ENCODE measurements at regions of chr3 and their contacts with region 1.

Region 1: GRCh38 chr3:63993653-63994079 is 29.6 kb downstream of the PSMD6 start:
- DNase-seq: peak; percentile 71
- H3K4me3 ChIP-seq: no peak overlapping the region
- H3K27ac ChIP-seq: no peak overlapping the region
- H3K4me1 ChIP-seq: peaks cover 5% of the 10 kb centered on the region
- H3K27me3 ChIP-seq: no peaks in the 10 kb centered on the region
- CTCF ChIP-seq: peak; percentile 90 to 92
- POLR2A ChIP-seq: no peak

Region 2: GRCh38 chr3:63818281-63819150 is 175.2 kb before region 1 on chr3:
- CTCF ChIA-PET with region 1: no interaction called
- POLR2A ChIA-PET with region 1: no interaction called
- dilution Hi-C with region 1: no loop called
- intact Hi-C with region 1: loop called (anchors 2 kb)
- DNase-seq: peak; percentile 61
- H3K4me3 ChIP-seq: no peak overlapping the region
- H3K27ac ChIP-seq: no peak overlapping the region
- H3K4me1 ChIP-seq: no peaks in the 10 kb centered on the region
- H3K27me3 ChIP-seq: no peaks in the 10 kb centered on the region
- CTCF ChIP-seq: peak; percentile 63 to 75
- POLR2A ChIP-seq: no peak

Region 3: DNA sequence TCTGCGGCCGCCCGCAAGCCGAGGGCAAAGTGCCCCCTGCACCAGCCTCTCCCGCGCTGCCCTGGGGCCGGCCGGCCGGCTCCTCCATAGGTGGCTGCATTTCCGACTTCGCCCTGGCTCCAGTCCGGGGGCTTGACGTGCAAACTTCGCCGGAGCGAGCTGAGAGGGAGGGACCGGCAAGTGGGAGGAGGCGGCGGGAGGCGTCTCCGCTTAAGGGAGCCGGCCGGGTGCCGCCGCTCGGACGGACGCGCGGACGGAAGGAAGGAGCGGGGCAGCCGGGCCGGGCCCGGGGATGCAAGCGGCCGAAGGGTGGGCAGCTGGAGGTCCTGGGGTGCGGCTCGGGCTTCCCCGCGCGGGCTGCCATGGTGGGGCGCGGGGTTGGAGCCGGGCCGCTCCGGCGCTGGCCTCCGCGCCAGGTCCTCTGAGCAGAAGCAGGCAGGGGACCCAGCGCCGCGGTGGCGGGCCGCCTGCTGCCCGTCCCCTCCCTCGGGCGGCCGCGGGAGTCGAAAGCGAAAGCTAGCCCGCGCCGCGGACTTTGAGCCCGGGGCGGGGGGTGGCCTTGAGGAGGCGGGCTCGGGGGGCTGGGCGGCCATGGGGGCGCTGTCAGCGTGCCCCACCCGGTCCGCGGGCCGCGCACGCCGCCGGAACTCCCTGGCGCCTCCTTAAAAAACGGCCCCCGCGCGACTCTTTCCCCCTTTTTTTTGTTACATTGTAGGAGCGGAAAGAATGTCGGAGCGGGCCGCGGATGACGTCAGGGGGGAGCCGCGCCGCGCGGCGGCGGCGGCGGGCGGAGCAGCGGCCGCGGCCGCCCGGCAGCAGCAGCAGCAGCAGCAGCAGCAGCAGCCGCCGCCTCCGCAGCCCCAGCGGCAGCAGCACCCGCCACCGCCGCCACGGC is 81.5 kb before region 1 on chr3 and contains the start of gene SCAANT1:
- CTCF ChIA-PET with region 1: interaction called, 3 read pairs
- POLR2A ChIA-PET with region 1: no interaction called
- dilution Hi-C with region 1: no loop called
- intact Hi-C with region 1: loop called (anchors 1 kb)
- DNase-seq: peak; percentile 86
- H3K4me3 ChIP-seq: peak within 1 kb of the TSS; percentile 74 to 85 (median 79)
- H3K27ac ChIP-seq: peak within 1 kb of the TSS; percentile 85
- H3K4me1 ChIP-seq: peaks cover 24% of the 10 kb centered on the region
- H3K27me3 ChIP-seq: no peaks in the 10 kb centered on the region
- CTCF ChIP-seq: no peak
- POLR2A ChIP-seq: no peak
- total RNA-seq, gene SCAANT1: not detected in 2 replicates

Region 4: GRCh38 chr3:64008017-64008971 is 14.6 kb after region 1 on chr3:
- CTCF ChIA-PET with region 1: interaction called, 10 read pairs
- POLR2A ChIA-PET with region 1: interaction called, 6 read pairs
- dilution Hi-C with region 1: no loop called
- intact Hi-C with region 1: no loop called
- DNase-seq: no peak
- H3K4me3 ChIP-seq: no peak overlapping the region
- H3K27ac ChIP-seq: no peak overlapping the region
- H3K4me1 ChIP-seq: peaks cover 5% of the 10 kb centered on the region
- H3K27me3 ChIP-seq: no peaks in the 10 kb centered on the region
- CTCF ChIP-seq: no peak
- POLR2A ChIP-seq: no peak

Measured in endothelial cell of umbilical vein (primary cell).